CD8-positive, alpha-beta memory T cell (primary cell): ENCODE measurements at regions of chr5 and their contacts with region 1.

Region 1: GRCh38 chr5:80255732-80256479 is at the start of gene SERINC5:
- DNase-seq: peak; percentile 79 to 89 (median 85)
- H3K4me3 ChIP-seq: peak within 1 kb of the TSS; percentile 99
- H3K4me3 Mint-ChIP-seq: peak within 1 kb of the TSS; percentile 94 to 99 (median 97)
- H3K27ac ChIP-seq: peak within 1 kb of the TSS; percentile 94
- H3K27ac Mint-ChIP-seq: peak within 1 kb of the TSS; percentile 84 to 99 (median 98)
- H3K4me1 ChIP-seq: peaks cover 44% of the 10 kb centered on the region
- H3K4me1 Mint-ChIP-seq: peaks cover 47 to 57% (median 56%) of the 10 kb centered on the region in 3 donors
- H3K27me3 ChIP-seq: no peaks in the 10 kb centered on the region
- H3K27me3 Mint-ChIP-seq: peaks cover 0 to 1% of the 10 kb centered on the region in 2 donors
- total RNA-seq, gene SERINC5: 32.9 to 33.3 TPM

Region 2: GRCh38 chr5:80139466-80139972 is 116.4 kb before region 1 on chr5:
- CTCF ChIA-PET with region 1: interaction called, 12 read pairs
- POLR2A ChIA-PET with region 1: interaction called, 13 read pairs
- DNase-seq: no peak
- H3K4me3 ChIP-seq: no peak overlapping the region
- H3K4me3 Mint-ChIP-seq: peak overlapping the region in 2 of 7 donors; percentile 8 to 56
- H3K27ac ChIP-seq: no peak overlapping the region
- H3K27ac Mint-ChIP-seq: peak overlapping the region; percentile 12 to 90 (median 80)
- H3K4me1 ChIP-seq: peaks cover 82% of the 10 kb centered on the region
- H3K4me1 Mint-ChIP-seq: peaks cover 65 to 91% (median 90%) of the 10 kb centered on the region in 3 donors
- H3K27me3 ChIP-seq: no peaks in the 10 kb centered on the region
- H3K27me3 Mint-ChIP-seq: peaks cover 0 to 3% of the 10 kb centered on the region in 2 donors

Region 3: GRCh38 chr5:80181618-80182211 is 74.2 kb before region 1 on chr5:
- CTCF ChIA-PET with region 1: interaction called, 17 read pairs
- POLR2A ChIA-PET with region 1: interaction called, 10 read pairs
- DNase-seq: peak in 4 of 5 donors; percentile 45 to 79 (median 76)
- H3K4me3 ChIP-seq: no peak overlapping the region
- H3K4me3 Mint-ChIP-seq: peak overlapping the region; percentile 13 to 75 (median 57)
- H3K27ac ChIP-seq: no peak overlapping the region
- H3K27ac Mint-ChIP-seq: peak overlapping the region; percentile 77 to 97 (median 90)
- H3K4me1 ChIP-seq: peaks cover 85% of the 10 kb centered on the region
- H3K4me1 Mint-ChIP-seq: peaks cover 76 to 90% (median 90%) of the 10 kb centered on the region in 3 donors
- H3K27me3 ChIP-seq: no peaks in the 10 kb centered on the region
- H3K27me3 Mint-ChIP-seq: peaks cover 0 to 2% of the 10 kb centered on the region in 2 donors

Region 4: GRCh38 chr5:80191991-80192398 is 63.9 kb before region 1 on chr5:
- CTCF ChIA-PET with region 1: interaction called, 20 read pairs
- POLR2A ChIA-PET with region 1: interaction called, 18 read pairs
- DNase-seq: peak in 3 of 5 donors; percentile 50 to 75 (median 68)
- H3K4me3 ChIP-seq: peak overlapping the region; percentile 19
- H3K4me3 Mint-ChIP-seq: peak overlapping the region; percentile 69 to 85 (median 74)
- H3K27ac ChIP-seq: peak overlapping the region; percentile 5
- H3K27ac Mint-ChIP-seq: peak overlapping the region; percentile 80 to 95 (median 92)
- H3K4me1 ChIP-seq: peaks cover 84% of the 10 kb centered on the region
- H3K4me1 Mint-ChIP-seq: peaks cover 74 to 90% (median 86%) of the 10 kb centered on the region in 3 donors
- H3K27me3 ChIP-seq: no peaks in the 10 kb centered on the region
- H3K27me3 Mint-ChIP-seq: no peaks in the 10 kb centered on the region

Region 5: DNA sequence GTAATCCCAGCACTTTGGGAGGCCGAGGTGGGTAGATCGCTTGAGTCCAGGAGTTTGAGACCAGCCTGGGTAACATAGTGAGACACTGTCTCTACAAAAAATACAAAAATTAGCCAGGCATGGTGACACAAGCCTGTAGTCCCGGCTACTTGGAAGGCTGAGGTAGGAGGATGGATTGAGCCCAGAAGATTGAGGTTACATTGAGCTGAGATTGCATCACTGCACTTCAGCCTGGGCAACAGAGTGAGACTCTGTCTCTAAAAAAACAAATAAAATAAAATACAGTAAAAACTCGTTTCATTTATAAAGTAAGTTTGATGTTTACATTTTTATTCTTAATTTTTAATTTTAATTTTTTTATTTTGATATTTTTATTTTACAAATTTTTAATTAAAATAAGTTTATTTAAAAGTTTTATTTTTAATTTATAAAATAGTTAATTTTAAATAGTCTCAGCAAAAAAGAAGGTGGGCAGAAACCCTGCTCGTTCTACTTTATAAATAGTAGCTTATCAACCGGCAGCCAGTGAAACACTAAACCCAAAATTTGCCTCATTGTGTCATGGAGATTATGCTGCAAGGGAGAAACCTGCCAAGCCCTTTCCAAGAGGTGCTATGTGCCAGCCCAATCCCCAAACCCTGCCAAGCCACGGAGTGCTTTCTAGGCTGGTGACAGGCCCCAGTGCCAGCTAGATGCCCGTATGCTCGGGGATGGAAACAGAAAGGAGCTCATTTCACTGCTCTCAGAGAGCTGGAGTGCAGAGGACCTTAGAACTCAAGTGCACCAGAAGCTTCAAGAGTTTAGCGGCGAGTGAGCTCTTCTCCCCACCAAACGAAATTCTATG is 38.9 kb before region 1 on chr5:
- CTCF ChIA-PET with region 1: interaction called, 5 read pairs
- POLR2A ChIA-PET with region 1: interaction called, 31 read pairs
- DNase-seq: no peak
- H3K4me3 ChIP-seq: peak overlapping the region; percentile 2
- H3K4me3 Mint-ChIP-seq: peak overlapping the region in 6 of 7 donors; percentile 26 to 89 (median 74)
- H3K27ac ChIP-seq: no peak overlapping the region
- H3K27ac Mint-ChIP-seq: peak overlapping the region; percentile 7 to 92 (median 75)
- H3K4me1 ChIP-seq: peaks cover 90% of the 10 kb centered on the region
- H3K4me1 Mint-ChIP-seq: peaks cover 74 to 94% (median 93%) of the 10 kb centered on the region in 3 donors
- H3K27me3 ChIP-seq: no peaks in the 10 kb centered on the region
- H3K27me3 Mint-ChIP-seq: no peaks in the 10 kb centered on the region

Region 6: GRCh38 chr5:80268916-80269315 is 13.0 kb after region 1 on chr5:
- CTCF ChIA-PET with region 1: interaction called, 18 read pairs
- POLR2A ChIA-PET with region 1: interaction called, 5 read pairs
- DNase-seq: peak in 1 of 5 donors; percentile 36
- H3K4me3 ChIP-seq: peak overlapping the region; percentile 7
- H3K4me3 Mint-ChIP-seq: peak overlapping the region in 2 of 7 donors; percentile 24 to 56
- H3K27ac ChIP-seq: no peak overlapping the region
- H3K27ac Mint-ChIP-seq: peak overlapping the region in 7 of 8 donors; percentile 46 to 80 (median 64)
- H3K4me1 ChIP-seq: peaks cover 39% of the 10 kb centered on the region
- H3K4me1 Mint-ChIP-seq: peaks cover 20 to 28% (median 25%) of the 10 kb centered on the region in 3 donors
- H3K27me3 ChIP-seq: no peaks in the 10 kb centered on the region
- H3K27me3 Mint-ChIP-seq: peaks cover 0 to 1% of the 10 kb centered on the region in 2 donors

Region 7: GRCh38 chr5:80355686-80356085 is 99.8 kb after region 1 on chr5:
- CTCF ChIA-PET with region 1: no interaction called
- POLR2A ChIA-PET with region 1: no interaction called
- DNase-seq: no peak
- H3K4me3 ChIP-seq: no peak overlapping the region
- H3K4me3 Mint-ChIP-seq: no peak overlapping the region
- H3K27ac ChIP-seq: no peak overlapping the region
- H3K27ac Mint-ChIP-seq: peak overlapping the region in 1 of 8 donors; percentile 7
- H3K4me1 ChIP-seq: no peaks in the 10 kb centered on the region
- H3K4me1 Mint-ChIP-seq: no peaks in the 10 kb centered on the region
- H3K27me3 ChIP-seq: no peaks in the 10 kb centered on the region
- H3K27me3 Mint-ChIP-seq: peaks cover 0 to 3% of the 10 kb centered on the region in 2 donors